MCF 10A (cell line): ENCODE measurements at regions of chr3 and their contacts with region 1.

Region 1: GRCh38 chr3:181700168-181701087 is 11.3 kb upstream of the SOX2 start:
- DNase-seq: peak; percentile 84
- H3K4me3 Mint-ChIP-seq: peak overlapping the region; percentile 60
- H3K27ac Mint-ChIP-seq: peak overlapping the region; percentile 65
- H3K4me1 Mint-ChIP-seq: peaks cover 16% of the 10 kb centered on the region
- H3K27me3 Mint-ChIP-seq: no peaks in the 10 kb centered on the region
- CTCF ChIP-seq: peak; percentile 87

Region 2: GRCh38 chr3:180802837-180803236 is 897.6 kb before region 1 on chr3:
- CTCF ChIA-PET with region 1: interaction called, 4 read pairs
- POLR2A ChIA-PET with region 1: no interaction called
- intact Hi-C with region 1: loop called (anchors 2 kb)
- DNase-seq: peak; percentile 46
- H3K4me3 Mint-ChIP-seq: no peak overlapping the region
- H3K27ac Mint-ChIP-seq: no peak overlapping the region
- H3K4me1 Mint-ChIP-seq: no peaks in the 10 kb centered on the region
- H3K27me3 Mint-ChIP-seq: no peaks in the 10 kb centered on the region
- CTCF ChIP-seq: peak; percentile 48

Region 3: DNA sequence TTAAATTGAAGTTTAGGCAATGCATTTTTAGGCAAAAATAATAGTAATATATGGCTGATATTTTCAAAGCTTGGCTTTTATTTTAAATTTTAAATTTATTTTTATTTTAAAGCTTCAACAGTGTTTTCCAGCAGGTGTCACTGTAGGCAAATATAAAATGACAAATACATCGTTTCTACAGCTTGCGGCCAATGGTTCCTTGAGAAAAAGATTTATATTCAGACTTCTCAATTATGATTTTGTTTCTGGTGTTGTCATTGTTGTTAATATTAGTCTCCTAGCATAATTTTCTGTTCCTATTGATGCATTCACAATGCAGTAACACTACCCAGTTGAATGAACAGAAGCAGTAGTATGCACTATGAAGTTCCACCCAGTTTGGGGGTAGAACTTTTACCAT is 490.2 kb before region 1 on chr3:
- CTCF ChIA-PET with region 1: interaction called, 52 read pairs
- POLR2A ChIA-PET with region 1: interaction called, 9 read pairs
- intact Hi-C with region 1: loop called (anchors 1 kb)
- DNase-seq: peak; percentile 42
- H3K4me3 Mint-ChIP-seq: no peak overlapping the region
- H3K27ac Mint-ChIP-seq: no peak overlapping the region
- H3K4me1 Mint-ChIP-seq: no peaks in the 10 kb centered on the region
- H3K27me3 Mint-ChIP-seq: no peaks in the 10 kb centered on the region
- CTCF ChIP-seq: peak; percentile 55

Region 4: DNA sequence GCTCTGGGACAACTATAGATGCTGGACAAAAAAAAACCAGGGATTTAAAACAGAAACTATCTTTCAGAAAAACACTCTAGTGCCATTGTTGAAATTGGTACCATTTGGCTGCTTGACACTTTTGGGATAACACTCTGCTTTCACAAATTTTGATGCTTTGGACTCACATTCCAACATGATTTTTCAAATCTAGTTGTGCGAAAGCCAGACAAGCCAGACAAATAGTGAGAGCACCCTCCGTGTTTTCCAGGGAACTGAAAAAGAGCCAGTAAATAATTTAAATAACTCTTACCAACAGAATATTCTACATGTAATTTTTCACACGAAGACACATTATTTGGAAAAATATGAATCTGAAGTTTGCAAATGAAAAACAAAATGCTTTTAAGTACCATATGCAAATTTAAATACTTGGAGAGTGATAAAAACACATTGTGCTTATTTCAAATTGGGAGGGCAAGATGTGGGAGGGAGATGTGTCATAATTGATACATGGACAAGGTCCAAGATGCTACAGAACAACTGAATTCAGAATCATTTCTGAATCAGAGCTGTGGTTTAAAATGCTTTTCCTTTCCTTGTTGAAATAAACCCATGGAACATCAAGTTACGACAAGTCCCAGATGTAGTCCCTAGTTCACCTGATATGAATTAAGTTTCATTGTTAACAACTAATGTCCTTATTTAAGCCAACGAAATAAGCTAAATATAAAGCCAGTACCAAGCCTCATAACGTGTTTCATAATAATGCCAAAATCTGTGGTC is 132.9 kb before region 1 on chr3:
- CTCF ChIA-PET with region 1: interaction called, 30 read pairs
- POLR2A ChIA-PET with region 1: no interaction called
- intact Hi-C with region 1: loop called (anchors 1 kb)
- DNase-seq: peak; percentile 49
- H3K4me3 Mint-ChIP-seq: no peak overlapping the region
- H3K27ac Mint-ChIP-seq: peak overlapping the region; percentile 12
- H3K4me1 Mint-ChIP-seq: peaks cover 15% of the 10 kb centered on the region
- H3K27me3 Mint-ChIP-seq: no peaks in the 10 kb centered on the region
- CTCF ChIP-seq: no peak

Region 5: DNA sequence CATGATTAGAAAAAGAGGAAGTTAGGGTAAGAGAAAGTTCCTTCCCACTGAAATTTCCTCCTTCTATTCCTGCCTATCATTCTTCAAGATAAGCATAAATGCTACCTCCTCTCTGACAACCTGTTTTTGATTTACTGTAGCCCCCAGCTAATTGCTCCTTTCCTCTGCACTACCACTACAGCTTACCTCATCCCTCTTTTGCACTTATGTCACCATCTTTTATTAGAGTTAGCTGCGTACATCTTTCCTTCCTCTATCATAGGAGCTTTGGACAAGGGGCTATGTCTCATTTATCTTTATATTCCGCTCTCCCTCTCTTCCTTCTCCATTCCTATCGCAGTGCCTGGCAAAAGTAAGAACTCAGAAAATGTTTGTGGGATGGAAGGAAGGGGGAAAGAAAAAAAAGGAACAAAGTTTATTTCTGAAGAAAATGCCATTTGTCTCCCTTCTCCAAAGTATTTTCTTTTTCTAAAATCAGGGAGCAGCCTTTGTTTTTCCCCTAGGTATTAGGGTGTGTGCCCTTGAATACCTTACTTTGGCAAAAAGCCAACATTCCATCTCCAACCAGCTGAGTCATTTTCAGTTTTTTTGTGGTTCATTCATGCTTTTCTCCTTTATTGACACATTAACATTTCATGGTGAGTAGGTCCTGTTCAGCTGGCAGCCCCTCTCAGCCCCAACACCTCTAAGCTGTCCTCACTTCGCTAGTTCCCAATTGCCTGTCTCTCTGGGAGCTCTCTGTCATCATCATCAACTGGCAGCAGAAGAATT is 76.3 kb before region 1 on chr3:
- CTCF ChIA-PET with region 1: interaction called, 21 read pairs
- POLR2A ChIA-PET with region 1: no interaction called
- intact Hi-C with region 1: no loop called
- DNase-seq: peak; percentile 63
- H3K4me3 Mint-ChIP-seq: peak overlapping the region; percentile 15
- H3K27ac Mint-ChIP-seq: peak overlapping the region; percentile 67
- H3K4me1 Mint-ChIP-seq: peaks cover 38% of the 10 kb centered on the region
- H3K27me3 Mint-ChIP-seq: no peaks in the 10 kb centered on the region
- CTCF ChIP-seq: no peak

Region 6: DNA sequence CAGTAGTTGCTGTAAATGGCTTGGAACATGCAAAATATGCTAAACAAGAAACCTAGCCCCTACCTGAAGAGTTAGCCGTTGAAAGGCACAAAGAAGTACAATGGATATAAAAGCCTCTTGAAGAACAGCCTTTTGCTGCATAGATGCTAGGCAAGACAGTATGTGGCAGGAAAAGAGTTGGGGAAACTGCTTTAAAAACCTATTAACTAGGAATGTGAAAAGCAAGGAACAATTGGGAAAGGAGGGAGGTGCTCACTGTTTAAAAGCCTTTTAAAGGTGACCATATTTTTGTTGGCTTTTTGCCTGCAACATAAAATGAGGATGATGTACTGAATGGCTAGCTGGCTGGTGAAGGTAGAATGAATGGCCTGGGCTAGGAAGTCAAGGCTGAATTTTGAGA is 13.2 kb before region 1 on chr3:
- CTCF ChIA-PET with region 1: interaction called, 45 read pairs
- POLR2A ChIA-PET with region 1: interaction called, 3 read pairs
- intact Hi-C with region 1: no loop called
- DNase-seq: no peak
- H3K4me3 Mint-ChIP-seq: no peak overlapping the region
- H3K27ac Mint-ChIP-seq: no peak overlapping the region
- H3K4me1 Mint-ChIP-seq: peaks cover 5% of the 10 kb centered on the region
- H3K27me3 Mint-ChIP-seq: no peaks in the 10 kb centered on the region
- CTCF ChIP-seq: no peak

Region 7: DNA sequence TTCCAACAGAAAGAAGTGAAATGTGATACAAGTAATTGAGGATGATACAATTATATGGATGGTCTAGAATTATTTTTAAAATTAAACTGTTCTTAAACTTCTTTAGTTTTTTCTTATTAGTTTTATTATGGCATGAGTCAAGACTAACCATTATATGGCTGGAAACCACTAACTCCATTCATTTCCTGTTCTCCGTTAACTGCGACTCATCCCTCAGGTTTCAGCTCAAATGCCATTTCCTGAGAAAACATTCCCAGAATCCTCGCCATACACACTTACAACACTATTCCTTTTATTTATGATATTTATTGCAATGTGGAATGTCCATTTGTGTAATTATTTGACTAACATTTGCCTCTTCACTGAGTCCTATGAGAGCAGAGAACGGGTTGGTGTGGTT is 405.4 kb after region 1 on chr3:
- CTCF ChIA-PET with region 1: no interaction called
- POLR2A ChIA-PET with region 1: no interaction called
- intact Hi-C with region 1: no loop called
- DNase-seq: peak; percentile 13
- H3K4me3 Mint-ChIP-seq: no peak overlapping the region
- H3K27ac Mint-ChIP-seq: no peak overlapping the region
- H3K4me1 Mint-ChIP-seq: peaks cover 5% of the 10 kb centered on the region
- H3K27me3 Mint-ChIP-seq: no peaks in the 10 kb centered on the region
- CTCF ChIP-seq: no peak